H1 (cell line): ENCODE measurements at regions of chr19 and their contacts with region 1.

Region 1: DNA sequence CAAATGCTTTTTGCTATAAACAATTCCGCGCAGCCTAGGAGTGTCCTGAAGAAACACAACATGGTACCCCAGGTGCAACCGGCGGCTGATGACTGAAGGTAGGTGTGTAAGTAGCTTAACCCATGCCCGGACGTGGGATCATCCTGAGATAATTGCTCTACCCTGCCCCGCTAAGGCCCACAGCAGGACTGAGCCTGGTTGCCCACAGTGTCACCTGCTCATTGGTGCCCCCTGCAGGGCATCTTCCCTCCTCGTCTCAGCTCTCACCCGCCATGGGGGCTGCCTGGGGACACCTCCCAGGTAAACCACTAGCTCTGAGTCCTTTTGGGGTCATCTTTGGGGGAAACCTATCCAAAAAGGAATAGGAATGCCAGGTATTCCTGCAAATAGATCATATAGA is 22.3 kb downstream of the TMEM161A start:
- DNase-seq: peak in 1 of 2 experiments; percentile 93
- H3K4me3 ChIP-seq: no peak overlapping the region
- H3K27ac ChIP-seq: no peak overlapping the region
- H3K4me1 ChIP-seq: peaks cover 3 to 12% (median 10%) of the 10 kb centered on the region in 4 experiments; a peak in 6 of 7 replicates
- H3K27me3 ChIP-seq: 0 out of 7 replicates have a peak, but pooled peaks cover 0 to 2% (median 0%) of the 10 kb centered on the region in 4 experiments
- CTCF ChIP-seq: peak; percentile 91 to 96 (median 95)
- EP300 ChIP-seq: no peak
- POLR2A ChIP-seq: no peak
- RAD21 ChIP-seq: peak; percentile 71 to 79

Region 2: DNA sequence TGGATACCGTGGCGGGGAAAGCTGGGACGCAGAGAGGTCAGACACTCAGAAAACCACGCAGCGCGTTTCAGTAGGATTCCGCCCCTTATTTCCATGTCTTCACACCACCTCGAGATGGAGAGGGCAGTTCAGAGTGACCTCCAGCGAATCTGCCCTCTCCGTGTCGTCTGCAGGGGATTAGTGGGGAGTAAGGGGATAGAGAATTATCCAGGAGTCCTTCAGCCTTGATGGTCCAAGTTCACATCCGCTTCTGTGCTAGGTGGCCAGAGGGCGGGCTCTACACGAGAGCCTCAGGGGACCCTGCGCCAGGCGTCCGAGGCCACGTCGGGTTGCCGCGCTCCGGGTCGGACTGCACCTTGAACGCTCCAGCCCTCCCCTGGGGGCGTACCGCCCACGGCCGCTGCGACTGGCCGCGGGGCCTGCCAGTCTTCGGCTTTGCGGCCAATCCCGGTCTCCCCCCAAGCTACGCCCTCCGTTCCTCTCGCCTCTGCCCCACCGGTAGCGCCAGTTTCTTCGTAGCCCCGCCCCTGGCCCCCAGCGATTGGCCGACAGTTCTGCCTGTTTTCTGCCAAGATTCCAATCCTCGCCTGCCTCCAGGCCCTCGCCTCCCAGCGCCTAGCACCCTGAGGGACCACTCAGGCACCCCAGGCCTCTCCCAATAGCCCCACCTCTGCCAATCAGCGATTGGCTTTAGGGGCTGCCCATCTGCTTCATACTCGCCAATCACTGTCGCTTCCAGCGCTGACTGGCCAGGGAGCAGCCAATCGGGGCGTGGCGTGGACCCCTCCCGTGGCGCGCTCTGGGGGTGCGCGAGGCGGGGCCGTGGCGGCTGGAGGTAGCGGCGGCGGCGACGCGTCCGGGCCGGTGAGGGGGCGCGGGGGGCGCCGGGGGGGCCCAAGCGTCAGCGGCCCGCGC is 52.5 kb before region 1 on chr19 and contains the start of gene SLC25A42:
- CTCF ChIA-PET with region 1: interaction called, 23 read pairs
- POLR2A ChIA-PET with region 1: interaction called, 4 read pairs
- DNase-seq: peak; percentile 99 to 100
- H3K4me3 ChIP-seq: peak within 1 kb of the TSS; percentile 43 to 67 (median 55)
- H3K27ac ChIP-seq: peak within 1 kb of the TSS; percentile 43; the same call in 1 of the 2 replicates
- H3K4me1 ChIP-seq: peaks cover 0 to 7% (median 5%) of the 10 kb centered on the region in 4 experiments; a peak in 5 of 7 replicates
- H3K27me3 ChIP-seq: peaks cover 0 to 38% (median 29%) of the 10 kb centered on the region in 4 experiments; a peak in 6 of 7 replicates
- CTCF ChIP-seq: no peak
- EP300 ChIP-seq: no peak
- POLR2A ChIP-seq: peak; percentile 60 to 74
- RAD21 ChIP-seq: peak in 1 of 2 experiments; percentile 14; a peak in 1 of 4 replicates
- total RNA-seq, gene SLC25A42: 4.1 and 6.2 TPM in 2 replicates

Region 3: GRCh38 chr19:19068659-19069654 is 47.0 kb before region 1 on chr19:
- CTCF ChIA-PET with region 1: interaction called, 20 read pairs
- POLR2A ChIA-PET with region 1: interaction called, 4 read pairs
- DNase-seq: no peak
- H3K4me3 ChIP-seq: no peak overlapping the region
- H3K27ac ChIP-seq: no peak overlapping the region
- H3K4me1 ChIP-seq: peaks cover 0 to 7% (median 3%) of the 10 kb centered on the region in 4 experiments; a peak in 5 of 7 replicates
- H3K27me3 ChIP-seq: peaks cover 0 to 63% (median 39%) of the 10 kb centered on the region in 4 experiments; a peak in 6 of 7 replicates
- CTCF ChIP-seq: no peak
- EP300 ChIP-seq: no peak
- POLR2A ChIP-seq: no peak
- RAD21 ChIP-seq: no peak

Region 4: DNA sequence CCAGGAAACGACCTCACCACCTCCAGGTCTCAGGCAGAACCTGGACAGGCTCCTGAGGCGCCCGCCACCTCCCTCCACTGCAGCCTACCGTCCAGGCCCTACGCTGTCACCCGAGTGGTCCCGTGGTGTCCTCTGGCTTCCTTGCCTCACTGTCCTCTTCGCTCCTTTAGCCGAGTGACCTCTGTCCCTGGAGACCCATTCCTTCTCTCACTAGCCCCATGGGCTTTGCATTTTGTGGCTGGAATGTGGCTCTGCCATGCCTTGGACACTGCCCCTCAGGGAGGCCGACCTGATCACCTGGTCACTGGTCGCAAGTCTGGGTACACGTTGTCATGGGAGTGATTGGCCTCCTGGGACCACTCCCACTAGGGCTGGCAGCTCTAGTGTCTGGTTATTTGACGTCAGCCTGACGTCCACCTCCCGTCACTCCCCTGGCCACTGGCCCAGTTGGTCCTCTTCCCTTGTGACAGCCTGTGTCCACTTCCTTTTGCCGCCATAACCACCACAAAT is 34.3 kb before region 1 on chr19:
- CTCF ChIA-PET with region 1: interaction called, 11 read pairs
- POLR2A ChIA-PET with region 1: interaction called, 5 read pairs
- DNase-seq: no peak
- H3K4me3 ChIP-seq: no peak overlapping the region
- H3K27ac ChIP-seq: no peak overlapping the region
- H3K4me1 ChIP-seq: no peaks in the 10 kb centered on the region
- H3K27me3 ChIP-seq: peaks cover 0 to 17% (median 7%) of the 10 kb centered on the region in 4 experiments; a peak in 6 of 7 replicates
- CTCF ChIP-seq: no peak
- EP300 ChIP-seq: no peak
- POLR2A ChIP-seq: no peak
- RAD21 ChIP-seq: no peak

Region 5: DNA sequence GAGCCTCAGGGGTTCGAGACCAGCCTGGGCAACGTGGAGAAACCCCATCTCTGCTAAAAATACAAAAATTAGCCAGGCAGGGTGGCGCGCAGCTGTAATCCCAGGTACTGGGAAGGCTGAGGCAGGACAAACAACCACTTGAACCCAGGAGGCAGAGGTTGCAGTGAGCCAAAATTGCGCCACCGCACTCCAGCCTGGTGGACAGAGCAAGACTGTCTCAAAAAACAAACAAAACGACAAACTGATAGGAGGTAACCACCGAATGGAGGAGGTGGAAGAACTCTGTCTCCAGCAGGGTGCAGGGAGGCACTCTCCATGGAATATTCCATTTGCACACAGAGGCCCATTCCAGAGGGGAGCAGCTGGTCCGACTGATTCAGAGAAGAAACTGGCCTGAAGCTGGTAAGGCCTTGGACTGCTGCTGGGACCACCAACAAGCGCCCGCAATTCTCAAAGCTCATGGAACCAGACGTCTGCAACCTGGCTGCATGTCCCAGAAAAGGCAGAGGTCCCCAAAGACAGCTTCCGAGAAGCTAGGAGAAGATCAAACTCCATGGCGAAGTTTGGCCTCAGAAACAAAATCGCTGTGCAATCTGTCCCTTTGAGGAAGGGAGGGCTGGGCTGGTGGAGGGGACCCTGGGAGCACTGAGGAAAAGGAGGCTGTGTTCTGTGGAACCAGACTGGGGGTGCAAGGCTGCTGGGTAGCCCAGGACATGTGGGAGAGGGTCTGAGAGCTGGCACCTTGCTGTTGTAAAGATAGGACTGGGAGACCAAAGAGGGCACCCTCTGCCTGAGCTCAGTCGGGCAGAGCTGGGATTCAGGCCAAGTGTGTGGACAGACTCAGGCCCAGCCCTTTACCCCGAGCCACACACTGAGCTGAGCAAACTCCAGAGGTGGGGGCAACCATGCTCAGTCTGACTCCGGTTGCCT is 17.0 kb before region 1 on chr19:
- CTCF ChIA-PET with region 1: interaction called, 11 read pairs
- POLR2A ChIA-PET with region 1: interaction called, 3 read pairs
- DNase-seq: no peak
- H3K4me3 ChIP-seq: no peak overlapping the region
- H3K27ac ChIP-seq: no peak overlapping the region
- H3K4me1 ChIP-seq: no peaks in the 10 kb centered on the region; a peak in 2 of 7 replicates
- H3K27me3 ChIP-seq: no peaks in the 10 kb centered on the region; a peak in 2 of 7 replicates
- CTCF ChIP-seq: no peak
- EP300 ChIP-seq: no peak
- POLR2A ChIP-seq: no peak
- RAD21 ChIP-seq: no peak

Region 6: DNA sequence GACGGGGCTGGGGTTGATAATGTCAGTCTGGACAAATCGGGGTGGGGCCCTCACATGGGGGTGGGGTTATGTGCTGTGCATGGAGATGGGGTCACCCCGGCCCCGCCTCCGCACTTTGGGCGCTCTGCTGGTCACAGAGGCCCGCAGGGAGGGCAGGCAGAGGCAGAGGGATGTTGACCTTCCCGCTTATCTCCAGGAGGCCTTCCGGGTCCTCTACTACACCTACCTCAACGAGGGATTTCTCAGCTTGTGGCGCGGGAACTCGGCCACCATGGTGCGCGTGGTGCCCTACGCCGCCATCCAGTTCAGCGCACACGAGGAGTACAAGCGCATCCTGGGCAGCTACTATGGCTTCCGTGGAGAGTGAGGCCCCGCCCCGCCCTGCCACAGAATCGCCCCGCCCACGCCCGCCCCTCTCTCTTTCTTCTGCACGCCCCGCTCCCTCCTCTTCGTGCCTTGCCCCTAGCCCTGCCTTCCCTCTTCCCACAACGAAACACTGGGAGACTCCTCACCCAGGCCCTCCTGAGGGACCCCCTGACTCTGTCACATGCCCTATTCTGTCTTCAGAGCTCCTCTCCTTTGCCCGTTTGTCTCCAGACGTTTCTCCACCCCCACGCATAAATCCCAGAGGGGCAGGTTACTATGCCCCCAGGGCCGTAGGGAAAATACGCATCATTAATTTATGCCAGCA is 10.4 kb before region 1 on chr19:
- CTCF ChIA-PET with region 1: interaction called, 16 read pairs
- POLR2A ChIA-PET with region 1: interaction called, 8 read pairs
- DNase-seq: peak in 1 of 2 experiments; percentile 88
- H3K4me3 ChIP-seq: peak overlapping the region; percentile 66 to 76 (median 75)
- H3K27ac ChIP-seq: peak overlapping the region; percentile 88
- H3K4me1 ChIP-seq: peaks cover 0 to 14% (median 9%) of the 10 kb centered on the region in 4 experiments; a peak in 6 of 7 replicates
- H3K27me3 ChIP-seq: no peaks in the 10 kb centered on the region
- CTCF ChIP-seq: no peak
- EP300 ChIP-seq: no peak
- POLR2A ChIP-seq: peak in 1 of 2 experiments; percentile 94; a peak in 2 of 3 replicates
- RAD21 ChIP-seq: no peak

Region 7: GRCh38 chr19:19138169-19138981 is 22.4 kb after region 1 on chr19 and contains the start of gene TMEM161A:
- CTCF ChIA-PET with region 1: interaction called, 24 read pairs
- POLR2A ChIA-PET with region 1: interaction called, 22 read pairs
- DNase-seq: peak; percentile 88 to 98
- H3K4me3 ChIP-seq: peak within 1 kb of the TSS; percentile 67 to 96 (median 72)
- H3K27ac ChIP-seq: no peak within 1 kb of the TSS
- H3K4me1 ChIP-seq: peaks cover 0 to 14% (median 10%) of the 10 kb centered on the region in 4 experiments; a peak in 6 of 7 replicates
- H3K27me3 ChIP-seq: peaks cover 0 to 3% (median 0%) of the 10 kb centered on the region in 4 experiments; a peak in 4 of 7 replicates
- CTCF ChIP-seq: no peak
- EP300 ChIP-seq: no peak
- POLR2A ChIP-seq: peak in 1 of 2 experiments; percentile 54; a peak in 1 of 3 replicates
- RAD21 ChIP-seq: no peak
- total RNA-seq, gene TMEM161A: 41.9 and 47.8 TPM in 2 replicates